Right ventricle myocardium inferior (tissue), 1 donor: ENCODE measurements at regions of chr14 and their contacts with region 1.

Region 1: GRCh38 chr14:39174560-39175444 is at the start of gene PNN:
- DNase-seq: peak; percentile 97
- ATAC-seq: peak; percentile 98
- total RNA-seq, gene PNN: 21.7 TPM

Region 2: DNA sequence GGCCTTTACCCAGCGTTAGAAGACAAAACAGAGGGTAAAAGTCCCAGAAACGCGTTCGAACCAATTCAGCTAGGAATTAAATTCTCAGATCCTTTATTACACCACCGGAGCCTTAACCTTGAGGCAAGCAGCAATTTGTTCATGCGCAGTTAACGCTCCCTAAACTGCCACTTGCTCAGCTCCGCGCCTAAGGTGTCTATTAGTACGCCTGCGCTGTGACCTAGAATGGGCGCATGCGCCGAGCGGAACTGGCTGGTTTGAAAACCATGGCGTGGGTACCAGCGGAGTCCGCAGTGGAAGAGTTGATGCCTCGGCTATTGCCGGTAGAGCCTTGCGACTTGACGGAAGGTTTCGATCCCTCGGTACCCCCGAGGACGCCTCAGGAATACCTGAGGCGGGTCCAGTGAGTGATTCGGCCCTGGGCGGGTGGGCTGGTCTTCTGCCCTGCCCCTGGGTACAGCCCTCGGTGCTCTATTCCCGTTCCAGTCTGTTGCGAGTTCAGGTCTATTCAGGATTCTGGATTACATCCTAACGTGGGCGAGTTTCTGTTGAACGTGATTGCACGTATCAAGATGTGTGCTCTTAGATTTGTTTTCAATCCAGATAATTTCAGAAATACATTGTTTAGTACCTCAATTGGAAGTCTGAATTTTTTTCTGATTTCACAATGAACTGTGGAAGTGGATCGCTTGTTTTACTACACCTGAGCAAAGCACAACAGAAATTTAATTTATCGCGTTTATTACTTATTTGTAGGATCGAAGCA is 60.5 kb before region 1 on chr14 and contains the start of gene GEMIN2:
- intact Hi-C with region 1: loop called (anchors 5 kb)
- DNase-seq: peak; percentile 98
- ATAC-seq: peak; percentile 100
- total RNA-seq, gene GEMIN2: 7.0 TPM

Region 3: GRCh38 chr14:39432179-39432618 is 257.4 kb after region 1 on chr14 and contains the start of gene FBXO33:
- intact Hi-C with region 1: loop called (anchors 2 kb)
- DNase-seq: peak; percentile 98
- ATAC-seq: peak; percentile 96
- total RNA-seq, gene FBXO33: 4.0 TPM